ENCODE measurements at regions of chr18 and their contacts with region 1.

Region 1: GRCh38 chr18:22465859-22466457 is 48.2 kb upstream of the CTAGE1 start:
- DNase-seq: peak; percentile 96
- H3K4me3 Mint-ChIP-seq: peak overlapping the region; percentile 60
- H3K27ac Mint-ChIP-seq: peak overlapping the region; percentile 98
- H3K4me1 Mint-ChIP-seq: peaks cover 27% of the 10 kb centered on the region
- H3K27me3 Mint-ChIP-seq: no peaks in the 10 kb centered on the region
- CTCF ChIP-seq: no peak

Region 2: GRCh38 chr18:22250591-22250996 is 215.4 kb before region 1 on chr18:
- CTCF ChIA-PET with region 1: no interaction called
- POLR2A ChIA-PET with region 1: no interaction called
- intact Hi-C with region 1: loop called (anchors 1 kb)
- DNase-seq: peak; percentile 97
- H3K4me3 Mint-ChIP-seq: peak overlapping the region; percentile 38
- H3K27ac Mint-ChIP-seq: peak overlapping the region; percentile 57
- H3K4me1 Mint-ChIP-seq: peaks cover 13% of the 10 kb centered on the region
- H3K27me3 Mint-ChIP-seq: peaks cover 11% of the 10 kb centered on the region
- CTCF ChIP-seq: no peak

Region 3: DNA sequence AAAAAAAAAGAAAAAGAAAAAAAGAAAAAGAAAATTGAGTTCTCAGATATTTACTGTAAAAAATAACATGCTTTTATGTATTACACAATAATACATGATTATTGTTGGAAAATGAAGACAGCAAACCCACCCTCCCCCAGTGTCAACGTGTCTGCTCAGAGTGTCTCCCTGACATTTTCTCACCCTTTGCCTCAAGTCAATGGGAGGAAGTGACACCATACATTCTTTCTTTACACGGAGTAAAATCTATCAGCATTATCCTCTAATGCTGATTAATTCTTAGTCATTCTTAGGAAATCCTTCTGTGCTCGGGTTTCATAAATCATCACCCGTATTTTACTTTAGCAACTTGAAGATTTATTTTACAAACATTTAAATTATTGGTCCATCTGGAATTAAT is 80.2 kb before region 1 on chr18:
- CTCF ChIA-PET with region 1: no interaction called
- POLR2A ChIA-PET with region 1: interaction called, 3 read pairs
- intact Hi-C with region 1: loop called (anchors 1 kb)
- DNase-seq: peak; percentile 84
- H3K4me3 Mint-ChIP-seq: no peak overlapping the region
- H3K27ac Mint-ChIP-seq: peak overlapping the region; percentile 71
- H3K4me1 Mint-ChIP-seq: peaks cover 7% of the 10 kb centered on the region
- H3K27me3 Mint-ChIP-seq: no peaks in the 10 kb centered on the region
- CTCF ChIP-seq: no peak

Region 4: GRCh38 chr18:22412176-22412908 is 53.6 kb before region 1 on chr18:
- CTCF ChIA-PET with region 1: no interaction called
- POLR2A ChIA-PET with region 1: interaction called, 10 read pairs
- intact Hi-C with region 1: no loop called
- DNase-seq: peak; percentile 36
- H3K4me3 Mint-ChIP-seq: no peak overlapping the region
- H3K27ac Mint-ChIP-seq: no peak overlapping the region
- H3K4me1 Mint-ChIP-seq: peaks cover 5% of the 10 kb centered on the region
- H3K27me3 Mint-ChIP-seq: peaks cover 10% of the 10 kb centered on the region
- CTCF ChIP-seq: no peak

Region 5: GRCh38 chr18:22485808-22486244 is 19.9 kb after region 1 on chr18:
- CTCF ChIA-PET with region 1: interaction called, 4 read pairs
- POLR2A ChIA-PET with region 1: interaction called, 17 read pairs
- intact Hi-C with region 1: no loop called
- DNase-seq: peak; percentile 81
- H3K4me3 Mint-ChIP-seq: no peak overlapping the region
- H3K27ac Mint-ChIP-seq: peak overlapping the region; percentile 62
- H3K4me1 Mint-ChIP-seq: peaks cover 33% of the 10 kb centered on the region
- H3K27me3 Mint-ChIP-seq: no peaks in the 10 kb centered on the region
- CTCF ChIP-seq: no peak

Measured in MCF 10A (cell line).